Left ventricle myocardium inferior (tissue), 1 donor: ENCODE measurements at regions of chr20 and their contacts with region 1.

Region 1: GRCh38 chr20:48904365-48905296 is 16.9 kb upstream of the ARFGEF2 start:
- DNase-seq: peak; percentile 37
- H3K4me3 ChIP-seq: no peak overlapping the region
- H3K27ac ChIP-seq: no peak overlapping the region
- H3K4me1 ChIP-seq: peaks cover 5% of the 10 kb centered on the region
- H3K27me3 ChIP-seq: no peaks in the 10 kb centered on the region
- CTCF ChIP-seq: peak; percentile 88

Region 2: DNA sequence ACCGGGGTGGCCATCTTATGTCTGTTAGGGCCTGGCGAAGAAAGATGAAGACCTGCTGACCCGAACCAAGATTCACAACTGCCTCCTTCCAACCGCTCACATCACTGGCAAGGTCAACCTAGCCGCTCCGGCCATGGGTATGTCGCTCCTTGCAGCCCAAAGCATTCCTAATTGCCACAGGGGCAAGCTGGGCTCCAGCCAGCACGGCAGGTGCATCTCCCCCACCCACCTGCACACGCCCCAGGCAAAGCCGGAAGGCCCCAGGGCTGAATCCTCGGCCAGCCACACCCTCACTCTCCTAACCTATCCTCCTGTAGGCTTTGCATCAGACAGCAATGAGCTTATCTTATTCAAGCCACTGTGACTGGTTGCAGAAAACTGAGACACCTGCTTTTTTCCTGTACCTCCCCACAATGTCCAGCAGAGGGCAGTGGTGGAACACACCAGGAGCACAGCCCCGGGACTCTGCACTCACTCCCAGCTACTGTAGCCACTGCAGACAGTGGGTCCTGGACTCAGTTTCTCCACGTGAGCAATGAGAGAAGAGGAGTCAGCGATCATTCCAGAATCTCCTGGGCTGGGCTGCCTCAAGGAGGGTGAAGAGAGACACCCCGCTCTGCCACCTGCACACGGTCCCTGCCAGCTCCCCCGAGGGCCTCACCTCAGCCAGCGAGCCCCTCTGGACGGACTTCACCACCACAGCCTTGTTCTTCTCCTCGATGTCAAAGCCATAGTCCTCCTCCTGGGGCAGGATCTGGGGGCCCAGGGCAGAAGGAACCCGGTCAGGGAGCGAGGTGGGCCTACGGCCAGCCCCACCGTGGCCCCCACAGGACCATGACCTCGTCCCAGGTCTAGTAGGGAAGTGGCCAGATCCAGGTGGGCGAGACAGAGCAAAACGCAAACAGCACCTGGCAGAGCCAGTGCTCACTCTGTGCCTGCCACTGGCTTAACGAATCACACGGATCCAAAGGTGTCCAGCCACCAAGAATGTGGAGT is 246.9 kb before region 1 on chr20:
- intact Hi-C with region 1: loop called (anchors 5 kb)
- DNase-seq: peak; percentile 52
- H3K4me3 ChIP-seq: no peak overlapping the region
- H3K27ac ChIP-seq: no peak overlapping the region
- H3K4me1 ChIP-seq: peaks cover 11% of the 10 kb centered on the region
- H3K27me3 ChIP-seq: no peaks in the 10 kb centered on the region
- CTCF ChIP-seq: peak; percentile 97

Region 3: GRCh38 chr20:48769069-48769879 is 135.4 kb before region 1 on chr20:
- intact Hi-C with region 1: no loop called
- DNase-seq: no peak
- H3K4me3 ChIP-seq: no peak overlapping the region
- H3K27ac ChIP-seq: no peak overlapping the region
- H3K4me1 ChIP-seq: peaks cover 62% of the 10 kb centered on the region
- H3K27me3 ChIP-seq: no peaks in the 10 kb centered on the region
- CTCF ChIP-seq: no peak